Activated CD8-positive, alpha-beta T cell treated with anti-CD3 and anti-CD28 coated beads for 36 hours (primary cell): ENCODE measurements at regions of chr6 and their contacts with region 1.

Region 1: GRCh38 chr6:75208298-75209183 is 2.7 kb upstream of the COL12A1 start:
- DNase-seq: peak; percentile 87
- ATAC-seq: peak; percentile 85
- H3K4me3 Mint-ChIP-seq: peak overlapping the region; percentile 26
- H3K27ac Mint-ChIP-seq: no peak overlapping the region
- H3K4me1 Mint-ChIP-seq: peaks cover 45% of the 10 kb centered on the region
- H3K27me3 Mint-ChIP-seq: peaks cover 71% of the 10 kb centered on the region
- CTCF ChIP-seq: peak; percentile 90

Region 2: GRCh38 chr6:73739096-73739495 is 1469.4 kb before region 1 on chr6:
- CTCF ChIA-PET with region 1: interaction called, 69 read pairs
- POLR2A ChIA-PET with region 1: no interaction called
- intact Hi-C with region 1: loop called (anchors 1 kb)
- DNase-seq: no peak
- ATAC-seq: peak; percentile 73
- H3K4me3 Mint-ChIP-seq: no peak overlapping the region
- H3K27ac Mint-ChIP-seq: no peak overlapping the region
- H3K4me1 Mint-ChIP-seq: no peaks in the 10 kb centered on the region
- H3K27me3 Mint-ChIP-seq: no peaks in the 10 kb centered on the region
- CTCF ChIP-seq: peak; percentile 77

Region 3: GRCh38 chr6:73969971-73970970 is 1238.3 kb before region 1 on chr6:
- CTCF ChIA-PET with region 1: interaction called, 22 read pairs
- POLR2A ChIA-PET with region 1: no interaction called
- intact Hi-C with region 1: loop called (anchors 10 kb)
- DNase-seq: no peak
- ATAC-seq: no peak
- H3K4me3 Mint-ChIP-seq: no peak overlapping the region
- H3K27ac Mint-ChIP-seq: no peak overlapping the region
- H3K4me1 Mint-ChIP-seq: no peaks in the 10 kb centered on the region
- H3K27me3 Mint-ChIP-seq: no peaks in the 10 kb centered on the region
- CTCF ChIP-seq: peak; percentile 38

Region 4: DNA sequence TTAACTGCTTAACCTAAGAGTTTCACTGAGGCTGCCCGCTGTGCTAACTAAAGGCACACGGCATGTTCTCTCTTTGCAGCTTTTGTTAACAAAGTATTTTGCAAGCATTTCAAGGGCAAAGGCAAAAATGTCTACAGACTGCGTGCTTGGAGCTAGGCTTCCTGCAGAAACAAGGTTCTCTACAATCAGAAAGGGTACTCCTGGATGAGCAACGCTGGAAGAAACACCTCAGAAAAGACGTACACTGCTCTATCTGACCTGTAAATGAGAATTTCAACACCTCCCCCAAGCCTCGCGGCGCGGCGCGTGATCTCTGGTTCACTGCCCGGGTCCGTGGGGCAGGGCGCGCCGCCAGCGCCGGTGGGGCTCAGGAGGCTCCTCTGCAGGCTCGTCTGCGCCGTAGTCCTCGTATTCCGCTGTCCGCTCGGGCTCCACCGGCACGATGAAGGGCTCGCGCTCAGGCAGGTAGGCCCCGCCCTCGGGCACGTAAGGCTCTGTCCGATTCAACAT is 123.6 kb before region 1 on chr6:
- CTCF ChIA-PET with region 1: interaction called, 7 read pairs
- POLR2A ChIA-PET with region 1: no interaction called
- intact Hi-C with region 1: loop called (anchors 10 kb)
- DNase-seq: no peak
- ATAC-seq: no peak
- H3K4me3 Mint-ChIP-seq: no peak overlapping the region
- H3K27ac Mint-ChIP-seq: no peak overlapping the region
- H3K4me1 Mint-ChIP-seq: peaks cover 1% of the 10 kb centered on the region
- H3K27me3 Mint-ChIP-seq: peaks cover 15% of the 10 kb centered on the region
- CTCF ChIP-seq: no peak

Region 5: DNA sequence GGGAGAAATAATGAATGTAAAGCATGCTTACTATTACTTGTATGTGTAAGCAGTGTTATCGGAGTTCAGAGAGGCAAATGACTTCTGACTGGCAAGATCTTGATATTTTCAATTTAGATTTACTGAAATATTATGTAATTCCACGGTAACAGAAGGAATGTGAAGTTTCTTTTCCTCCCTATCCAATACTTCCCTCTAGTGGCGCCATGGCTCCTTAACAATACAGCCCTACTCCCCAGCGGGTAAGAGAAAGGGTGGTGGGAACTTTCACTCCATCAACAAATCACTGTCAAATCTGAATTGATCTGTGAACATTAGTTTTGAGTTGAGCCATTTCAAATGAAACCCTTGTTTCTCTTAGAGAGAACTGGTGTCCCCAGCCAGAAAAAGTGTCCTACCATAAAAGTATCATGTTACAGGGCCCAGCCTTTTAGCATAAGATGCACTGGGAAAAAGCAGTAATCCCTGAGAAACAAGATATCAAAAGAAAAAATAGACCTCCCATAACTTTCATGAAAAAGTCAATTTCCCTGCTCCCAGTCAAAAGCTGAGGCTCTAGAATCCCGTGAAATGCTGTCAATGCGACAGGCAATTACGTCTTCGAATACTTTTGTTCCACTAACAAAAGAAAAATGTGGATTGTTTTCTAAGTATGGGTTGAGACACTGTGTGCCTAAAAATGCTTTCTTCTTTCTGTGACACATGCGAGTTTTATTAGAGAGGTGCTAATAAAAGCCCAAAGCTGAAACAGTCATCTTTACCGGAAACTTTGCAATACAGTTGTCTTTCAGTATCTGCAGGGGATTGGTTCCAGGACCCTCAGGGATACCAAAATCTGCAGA is 22.2 kb after region 1 on chr6:
- CTCF ChIA-PET with region 1: interaction called, 20 read pairs
- POLR2A ChIA-PET with region 1: no interaction called
- intact Hi-C with region 1: no loop called
- DNase-seq: no peak
- ATAC-seq: no peak
- H3K4me3 Mint-ChIP-seq: no peak overlapping the region
- H3K27ac Mint-ChIP-seq: no peak overlapping the region
- H3K4me1 Mint-ChIP-seq: no peaks in the 10 kb centered on the region
- H3K27me3 Mint-ChIP-seq: no peaks in the 10 kb centered on the region
- CTCF ChIP-seq: peak; percentile 23